Panc1 (cell line): ENCODE measurements at regions of chr3 and their contacts with region 1.

Region 1: GRCh38 chr3:169493521-169494141 is 169.9 kb downstream of the MECOM start:
- DNase-seq: no peak
- ATAC-seq: no peak
- H3K4me3 ChIP-seq: no peak overlapping the region
- H3K27ac ChIP-seq: no peak overlapping the region
- H3K4me1 ChIP-seq: no peaks in the 10 kb centered on the region
- H3K27me3 ChIP-seq: no peaks in the 10 kb centered on the region
- CTCF ChIP-seq: no peak

Region 2: GRCh38 chr3:169362301-169362700 is 131.3 kb before region 1 on chr3:
- CTCF ChIA-PET with region 1: no interaction called
- POLR2A ChIA-PET with region 1: interaction called, 11 read pairs
- in situ Hi-C with region 1: no loop called
- intact Hi-C with region 1: no loop called
- DNase-seq: no peak
- ATAC-seq: no peak
- H3K4me3 ChIP-seq: no peak overlapping the region
- H3K27ac ChIP-seq: no peak overlapping the region
- H3K4me1 ChIP-seq: no peaks in the 10 kb centered on the region
- H3K27me3 ChIP-seq: no peaks in the 10 kb centered on the region
- CTCF ChIP-seq: no peak